ENCODE measurements at regions of chr10 and their contacts with region 1.

Region 1: GRCh38 chr10:90862908-90863514 is 5.2 kb upstream of the HTR7 start:
- DNase-seq: no peak
- ATAC-seq: no peak
- H3K4me3 ChIP-seq: no peak overlapping the region
- H3K27ac ChIP-seq: no peak overlapping the region
- H3K4me1 ChIP-seq: peaks cover 5% of the 10 kb centered on the region
- H3K27me3 ChIP-seq: peaks cover 17% of the 10 kb centered on the region
- CTCF ChIP-seq: peak; percentile 63

Region 2: GRCh38 chr10:90751107-90751997 is 111.7 kb before region 1 on chr10:
- intact Hi-C with region 1: loop called (anchors 10 kb)
- DNase-seq: no peak
- ATAC-seq: peak; percentile 81
- H3K4me3 ChIP-seq: no peak overlapping the region
- H3K27ac ChIP-seq: no peak overlapping the region
- H3K4me1 ChIP-seq: no peaks in the 10 kb centered on the region
- H3K27me3 ChIP-seq: no peaks in the 10 kb centered on the region
- CTCF ChIP-seq: peak; percentile 74

Measured in upper lobe of right lung (tissue), 1 donor.